ENCODE measurements at regions of chr3 and their contacts with region 1.

Region 1: DNA sequence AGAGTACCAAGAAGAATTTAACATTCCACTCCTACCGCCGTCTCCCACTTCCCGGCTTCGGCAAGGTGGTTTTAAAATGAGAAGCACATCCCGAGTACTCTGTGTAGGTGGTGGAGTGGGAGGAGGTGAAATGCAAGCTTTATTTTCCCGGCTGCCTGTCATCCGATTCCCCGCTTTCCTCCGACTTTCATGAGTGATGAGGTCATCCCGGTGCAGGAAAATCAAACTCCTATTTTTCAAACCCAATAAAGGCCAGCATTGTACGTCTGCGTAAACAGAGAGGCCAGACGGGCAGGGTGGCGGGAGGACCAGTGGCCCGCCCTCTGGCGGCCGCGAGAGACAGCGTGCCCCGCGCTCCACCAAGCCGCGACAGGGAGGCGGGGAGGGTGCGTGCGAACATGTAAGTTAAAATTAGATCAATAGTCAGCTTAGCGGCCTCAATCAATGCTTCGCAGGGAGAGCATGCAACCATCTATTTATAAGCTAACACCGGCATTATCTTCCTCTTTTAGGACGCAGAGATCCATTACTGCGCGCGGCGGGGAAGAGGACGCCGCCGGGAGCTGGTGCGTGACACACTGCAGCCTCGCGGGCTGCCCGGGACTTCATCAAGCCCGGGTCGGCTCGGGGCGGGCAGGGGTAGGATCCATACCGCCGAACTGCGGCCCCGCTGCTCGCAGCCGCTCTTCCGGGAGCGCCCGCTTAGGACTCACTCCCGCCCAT is 163.3 kb downstream of the CD47 start:
- DNase-seq: no peak
- ATAC-seq: peak; percentile 99
- H3K4me3 ChIP-seq: peak overlapping the region; percentile 58 to 70
- H3K27ac ChIP-seq: no peak overlapping the region
- H3K4me1 ChIP-seq: 0 out of 2 replicates have a peak, but pooled peaks cover 2% of the 10 kb centered on the region
- H3K27me3 ChIP-seq: peaks cover 27% of the 10 kb centered on the region
- CTCF ChIP-seq: peak; percentile 99

Region 2: DNA sequence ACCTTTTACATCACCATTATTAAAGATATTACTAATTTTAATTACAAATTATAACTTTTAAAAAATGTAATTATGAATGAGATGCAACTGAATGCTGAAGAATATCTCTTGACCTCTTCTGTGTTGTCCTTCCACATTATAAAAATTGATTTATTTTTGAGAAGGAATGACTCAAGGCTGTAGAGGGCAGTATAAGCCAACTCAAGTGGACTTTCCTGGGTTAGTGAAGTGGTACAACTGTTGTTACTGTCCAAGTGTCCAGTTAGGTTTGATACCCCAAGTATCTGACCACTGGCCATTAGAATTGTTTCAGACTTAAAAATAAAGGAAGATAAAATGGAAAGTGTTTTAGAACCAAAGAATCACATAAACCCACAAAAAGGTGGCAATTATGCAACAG is 352.9 kb before region 1 on chr3:
- CTCF ChIA-PET with region 1: no interaction called
- POLR2A ChIA-PET with region 1: no interaction called
- in situ Hi-C with region 1: no loop called
- intact Hi-C with region 1: loop called (anchors 10 kb)
- DNase-seq: peak; percentile 12
- ATAC-seq: peak; percentile 83; the same call in 1 of the 2 replicates
- H3K4me3 ChIP-seq: no peak overlapping the region
- H3K27ac ChIP-seq: no peak overlapping the region
- H3K4me1 ChIP-seq: no peaks in the 10 kb centered on the region
- H3K27me3 ChIP-seq: no peaks in the 10 kb centered on the region
- CTCF ChIP-seq: peak; percentile 74; the same call in 1 of the 2 replicates

Region 3: DNA sequence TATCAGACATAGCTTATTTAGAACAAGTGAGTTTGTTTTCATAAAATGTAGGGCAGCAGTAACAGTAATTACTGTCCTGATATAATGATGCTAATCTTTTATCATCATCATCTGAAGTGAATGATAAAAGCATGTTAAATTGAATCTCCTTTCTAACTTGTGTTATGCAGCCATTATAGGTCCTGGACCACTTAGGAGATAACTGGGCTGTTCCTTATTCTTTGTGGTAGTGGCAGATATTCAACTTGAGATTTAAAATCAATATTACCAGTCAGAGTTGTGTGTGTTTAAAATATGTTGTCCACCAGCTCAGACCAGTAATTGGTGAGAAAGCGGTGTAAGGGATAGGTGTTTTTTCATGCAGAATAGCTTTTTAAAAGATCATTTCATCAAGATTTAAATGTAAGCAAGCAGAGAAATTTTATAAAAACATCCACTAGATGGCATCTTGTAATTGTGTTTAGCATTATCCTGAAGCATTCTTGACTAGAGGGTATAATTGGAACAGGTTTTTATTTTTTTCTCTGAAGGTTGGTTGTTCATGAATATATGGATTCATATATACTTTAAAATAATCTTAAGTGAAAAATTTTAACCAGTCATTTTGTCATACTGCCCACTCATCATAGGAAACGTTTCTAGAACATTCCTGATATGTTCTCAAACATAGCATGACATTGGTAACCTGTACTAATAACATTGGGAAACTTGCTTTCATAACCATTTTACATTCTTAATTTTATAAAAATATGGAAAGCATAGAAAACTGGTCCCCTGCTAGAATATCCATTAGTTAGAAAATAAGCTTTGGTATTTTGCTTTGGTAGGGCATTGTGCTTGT is 250.8 kb before region 1 on chr3:
- CTCF ChIA-PET with region 1: no interaction called
- POLR2A ChIA-PET with region 1: no interaction called
- in situ Hi-C with region 1: no loop called
- intact Hi-C with region 1: loop called (anchors 5 kb)
- DNase-seq: no peak
- ATAC-seq: peak; percentile 83
- H3K4me3 ChIP-seq: no peak overlapping the region
- H3K27ac ChIP-seq: no peak overlapping the region
- H3K4me1 ChIP-seq: no peaks in the 10 kb centered on the region
- H3K27me3 ChIP-seq: no peaks in the 10 kb centered on the region; the same call in none of the 2 replicates
- CTCF ChIP-seq: peak; percentile 71; the same call in 1 of the 2 replicates

Region 4: DNA sequence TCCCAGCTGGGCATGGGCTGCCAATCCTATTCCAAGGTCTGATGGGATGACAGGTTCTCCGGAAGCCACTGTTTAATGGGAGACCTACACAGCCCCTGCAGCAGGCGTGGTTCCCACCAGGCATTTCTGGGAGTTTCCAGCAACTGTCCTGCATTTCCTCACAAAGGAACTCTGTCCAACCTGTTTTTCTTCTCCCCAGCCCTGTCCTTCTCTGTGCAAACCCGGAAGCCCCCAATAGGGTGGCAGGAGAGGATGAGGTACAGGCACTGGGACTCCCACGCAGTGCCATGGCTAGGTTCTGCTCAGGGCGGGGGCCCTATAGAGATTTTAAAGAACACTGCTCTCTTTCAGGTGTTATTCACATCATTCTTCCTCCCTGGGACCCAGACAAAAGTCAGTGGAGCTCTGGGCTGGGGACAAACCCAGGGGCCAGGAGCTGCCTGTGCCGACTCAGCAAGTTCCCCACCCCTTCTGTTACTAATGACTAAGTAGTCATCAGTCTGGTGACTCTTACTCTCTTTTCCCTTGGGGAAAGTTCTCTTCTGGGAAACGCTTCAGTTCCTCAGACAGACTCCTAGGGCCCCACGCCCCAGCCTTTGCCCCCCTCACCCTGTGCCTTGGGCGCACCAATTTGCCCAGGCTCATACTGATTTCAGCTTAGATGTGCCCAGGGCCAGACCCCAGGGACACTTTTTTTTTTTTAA is 65.6 kb after region 1 on chr3:
- CTCF ChIA-PET with region 1: no interaction called
- POLR2A ChIA-PET with region 1: no interaction called
- in situ Hi-C with region 1: no loop called
- intact Hi-C with region 1: no loop called
- DNase-seq: no peak
- ATAC-seq: no peak
- H3K4me3 ChIP-seq: no peak overlapping the region
- H3K27ac ChIP-seq: no peak overlapping the region
- H3K4me1 ChIP-seq: no peaks in the 10 kb centered on the region; the same call in 1 of the 2 replicates
- H3K27me3 ChIP-seq: peaks cover 2% of the 10 kb centered on the region; the same call in 1 of the 2 replicates
- CTCF ChIP-seq: no peak

Region 5: GRCh38 chr3:108088697-108089096 is 161.2 kb after region 1 on chr3:
- CTCF ChIA-PET with region 1: interaction called, 9 read pairs
- POLR2A ChIA-PET with region 1: no interaction called
- in situ Hi-C with region 1: no loop called
- intact Hi-C with region 1: loop called (anchors 10 kb)
- DNase-seq: no peak
- ATAC-seq: no peak
- H3K4me3 ChIP-seq: peak overlapping the region; percentile 90 to 92
- H3K27ac ChIP-seq: peak overlapping the region; percentile 88
- H3K4me1 ChIP-seq: peaks cover 19% of the 10 kb centered on the region; the same call in 1 of the 2 replicates
- H3K27me3 ChIP-seq: no peaks in the 10 kb centered on the region
- CTCF ChIP-seq: no peak

Region 6: DNA sequence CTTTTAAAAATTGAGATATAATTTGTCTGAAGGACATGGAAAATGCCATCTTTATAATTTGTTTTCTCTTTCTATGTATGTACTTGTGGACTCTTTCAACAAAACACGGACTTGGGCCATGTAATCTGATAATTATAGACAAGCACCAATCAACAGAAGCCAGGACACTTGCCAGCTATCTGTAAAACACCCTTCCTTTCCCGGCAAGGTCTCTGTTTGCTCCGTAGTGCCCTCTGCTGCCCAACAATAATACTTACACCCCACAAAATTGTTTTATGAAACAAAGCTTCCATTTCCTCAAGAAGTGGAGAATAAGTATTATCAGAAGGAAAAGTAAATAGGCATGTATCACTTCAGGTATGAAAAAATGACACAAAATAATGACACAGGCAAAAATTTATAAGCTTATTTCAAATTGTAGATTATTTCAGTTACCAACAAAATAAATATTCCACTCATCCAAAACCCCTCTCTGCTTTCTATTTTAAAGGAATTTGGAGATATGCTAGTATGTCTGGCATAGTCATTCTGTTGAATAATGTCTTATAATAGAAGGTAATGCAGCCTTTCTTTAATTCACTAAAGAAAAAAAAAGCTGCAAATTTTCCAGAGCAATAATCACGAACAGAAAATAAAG is 550.1 kb after region 1 on chr3:
- CTCF ChIA-PET with region 1: interaction called, 6 read pairs
- POLR2A ChIA-PET with region 1: no interaction called
- in situ Hi-C with region 1: no loop called
- intact Hi-C with region 1: loop called (anchors 10 kb)
- DNase-seq: no peak
- ATAC-seq: 0 out of 2 replicates have a peak, but pooled peaks have one; percentile 60
- H3K4me3 ChIP-seq: no peak overlapping the region
- H3K27ac ChIP-seq: no peak overlapping the region
- H3K4me1 ChIP-seq: 0 out of 2 replicates have a peak, but pooled peaks cover 1% of the 10 kb centered on the region
- H3K27me3 ChIP-seq: no peaks in the 10 kb centered on the region
- CTCF ChIP-seq: peak; percentile 88